ENCODE measurements at regions of chr16 and their contacts with region 1.

Region 1: GRCh38 chr16:67017810-67018488 is 11.0 kb upstream of the CBFB start:
- DNase-seq: peak; percentile 82 to 92 (median 90)
- ATAC-seq: peak; percentile 89
- H3K4me3 ChIP-seq: no peak overlapping the region
- H3K27ac ChIP-seq: no peak overlapping the region
- H3K4me1 ChIP-seq: peaks cover 27% of the 10 kb centered on the region
- H3K27me3 ChIP-seq: peaks cover 0 to 12% of the 10 kb centered on the region in 2 donors
- CTCF ChIP-seq: peak; percentile 54 to 94 (median 81)
- POLR2A ChIP-seq: no peak

Region 2: GRCh38 chr16:66977341-66978113 is 40.4 kb before region 1 on chr16:
- intact Hi-C with region 1: no loop called
- DNase-seq: peak; percentile 89 to 93 (median 90)
- ATAC-seq: peak; percentile 91
- H3K4me3 ChIP-seq: no peak overlapping the region
- H3K27ac ChIP-seq: no peak overlapping the region
- H3K4me1 ChIP-seq: no peaks in the 10 kb centered on the region
- H3K27me3 ChIP-seq: no peaks in the 10 kb centered on the region
- CTCF ChIP-seq: peak; percentile 89 to 99 (median 96)
- POLR2A ChIP-seq: no peak

Region 3: GRCh38 chr16:67150833-67151396 is 133.0 kb after region 1 on chr16 and contains the start of gene B3GNT9:
- intact Hi-C with region 1: loop called (anchors 5 kb)
- DNase-seq: peak in 3 of 4 donors; percentile 45 to 72 (median 70)
- ATAC-seq: peak; percentile 54
- H3K4me3 ChIP-seq: peak within 1 kb of the TSS; percentile 14 to 31
- H3K27ac ChIP-seq: peak within 1 kb of the TSS; percentile 17 to 61 (median 38)
- H3K4me1 ChIP-seq: peaks cover 30% of the 10 kb centered on the region
- H3K27me3 ChIP-seq: no peaks in the 10 kb centered on the region
- CTCF ChIP-seq: no peak
- POLR2A ChIP-seq: peak in 1 of 3 donors; percentile 12
- total RNA-seq, gene B3GNT9: 8.3 to 9.9 TPM